HCT116 (cell line): ENCODE measurements at regions of chr19 and their contacts with region 1.

Region 1: DNA sequence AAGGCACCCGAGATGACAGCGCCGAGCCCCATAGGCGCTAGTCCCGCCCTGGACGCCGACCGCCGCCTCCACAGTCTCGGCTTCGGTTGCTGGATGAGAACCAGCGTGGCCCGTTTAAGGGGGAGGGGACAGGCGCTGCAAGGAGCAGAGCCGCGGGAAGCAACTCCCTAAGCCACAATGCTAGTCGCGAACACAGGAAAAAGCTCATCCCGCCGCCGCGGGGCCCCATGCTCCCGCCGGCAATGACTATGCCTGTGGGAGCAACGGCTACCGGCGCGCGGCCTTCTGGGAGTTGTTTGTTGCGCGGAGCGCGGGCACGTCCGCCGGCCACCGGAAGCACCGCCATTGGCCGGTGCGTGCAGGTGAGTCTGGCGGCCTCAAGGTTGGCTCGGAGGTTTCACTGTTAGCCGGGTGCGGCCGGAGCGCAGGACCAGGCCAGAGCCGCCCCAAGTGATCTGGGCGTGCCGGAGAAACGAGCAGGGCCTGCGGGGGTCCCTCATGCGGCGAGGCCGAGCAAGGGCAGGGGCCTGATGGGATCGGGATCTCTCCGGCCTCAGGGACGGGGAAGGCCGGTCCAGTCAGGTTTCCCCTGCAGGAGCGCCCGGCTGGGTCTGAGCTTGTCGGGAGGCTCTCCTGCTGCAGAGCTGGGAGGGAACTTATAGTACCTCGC is at the start of gene ZNF544:
- DNase-seq: peak; percentile 48
- ATAC-seq: peak; percentile 92
- H3K4me3 ChIP-seq: peak within 1 kb of the TSS; percentile 73 to 91
- H3K27ac ChIP-seq: peak within 1 kb of the TSS; percentile 98
- H3K4me1 ChIP-seq: peaks cover 3 to 17% of the 10 kb centered on the region in 2 experiments
- H3K27me3 ChIP-seq: no peaks in the 10 kb centered on the region
- CTCF ChIP-seq: no peak
- POLR2A ChIP-seq: peak; percentile 89
- RAD21 ChIP-seq: no peak
- total RNA-seq, gene ZNF544: 46.3 TPM

Region 2: DNA sequence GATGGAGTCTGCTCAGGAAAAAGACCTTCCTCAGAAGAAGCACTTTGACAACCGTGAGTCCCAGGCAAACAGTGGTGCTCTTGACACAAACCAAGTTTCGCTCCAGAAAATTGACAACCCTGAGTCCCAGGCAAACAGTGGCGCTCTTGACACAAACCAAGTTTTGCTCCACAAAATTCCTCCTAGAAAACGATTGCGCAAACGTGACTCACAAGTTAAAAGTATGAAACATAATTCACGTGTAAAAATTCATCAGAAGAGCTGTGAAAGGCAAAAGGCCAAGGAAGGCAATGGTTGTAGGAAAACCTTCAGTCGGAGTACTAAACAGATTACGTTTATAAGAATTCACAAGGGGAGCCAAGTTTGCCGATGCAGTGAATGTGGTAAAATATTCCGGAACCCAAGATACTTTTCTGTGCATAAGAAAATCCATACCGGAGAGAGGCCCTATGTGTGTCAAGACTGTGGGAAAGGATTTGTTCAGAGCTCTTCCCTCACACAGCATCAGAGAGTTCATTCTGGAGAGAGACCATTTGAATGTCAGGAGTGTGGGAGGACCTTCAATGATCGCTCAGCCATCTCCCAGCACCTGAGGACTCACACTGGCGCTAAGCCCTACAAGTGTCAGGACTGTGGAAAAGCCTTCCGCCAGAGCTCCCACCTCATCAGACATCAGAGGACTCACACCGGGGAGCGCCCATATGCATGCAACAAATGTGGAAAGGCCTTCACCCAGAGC is 16.2 kb before region 1 on chr19:
- CTCF ChIA-PET with region 1: no interaction called
- POLR2A ChIA-PET with region 1: no interaction called
- RAD21 ChIA-PET with region 1: no interaction called
- intact Hi-C with region 1: no loop called
- DNase-seq: no peak
- ATAC-seq: no peak
- H3K4me3 ChIP-seq: no peak overlapping the region
- H3K27ac ChIP-seq: no peak overlapping the region
- H3K4me1 ChIP-seq: no peaks in the 10 kb centered on the region
- H3K27me3 ChIP-seq: no peaks in the 10 kb centered on the region
- CTCF ChIP-seq: no peak
- POLR2A ChIP-seq: no peak
- RAD21 ChIP-seq: no peak

Region 3: GRCh38 chr19:58305065-58305931 is 76.6 kb after region 1 on chr19 and contains the start of gene ERVK3-1:
- CTCF ChIA-PET with region 1: interaction called, 3 read pairs
- POLR2A ChIA-PET with region 1: no interaction called
- RAD21 ChIA-PET with region 1: no interaction called
- intact Hi-C with region 1: loop called (anchors 5 kb)
- DNase-seq: peak; percentile 91
- ATAC-seq: peak; percentile 99
- H3K4me3 ChIP-seq: peak within 1 kb of the TSS; percentile 92 to 93
- H3K27ac ChIP-seq: peak within 1 kb of the TSS; percentile 74
- H3K4me1 ChIP-seq: peaks cover 5 to 15% of the 10 kb centered on the region in 2 experiments; a peak in 3 of 4 replicates
- H3K27me3 ChIP-seq: no peaks in the 10 kb centered on the region
- CTCF ChIP-seq: no peak
- POLR2A ChIP-seq: peak; percentile 78
- RAD21 ChIP-seq: no peak
- total RNA-seq, gene ERVK3-1: 28.1 TPM

Region 4: GRCh38 chr19:58439576-58440554 is 211.1 kb after region 1 on chr19 and contains the start of gene ZNF132:
- CTCF ChIA-PET with region 1: no interaction called
- POLR2A ChIA-PET with region 1: no interaction called
- RAD21 ChIA-PET with region 1: no interaction called
- intact Hi-C with region 1: no loop called
- DNase-seq: no peak
- ATAC-seq: no peak
- H3K4me3 ChIP-seq: no peak within 1 kb of the TSS
- H3K27ac ChIP-seq: no peak within 1 kb of the TSS
- H3K4me1 ChIP-seq: no peaks in the 10 kb centered on the region
- H3K27me3 ChIP-seq: no peaks in the 10 kb centered on the region
- CTCF ChIP-seq: no peak
- POLR2A ChIP-seq: no peak
- RAD21 ChIP-seq: no peak
- total RNA-seq, gene ZNF132: not detected

Region 5: DNA sequence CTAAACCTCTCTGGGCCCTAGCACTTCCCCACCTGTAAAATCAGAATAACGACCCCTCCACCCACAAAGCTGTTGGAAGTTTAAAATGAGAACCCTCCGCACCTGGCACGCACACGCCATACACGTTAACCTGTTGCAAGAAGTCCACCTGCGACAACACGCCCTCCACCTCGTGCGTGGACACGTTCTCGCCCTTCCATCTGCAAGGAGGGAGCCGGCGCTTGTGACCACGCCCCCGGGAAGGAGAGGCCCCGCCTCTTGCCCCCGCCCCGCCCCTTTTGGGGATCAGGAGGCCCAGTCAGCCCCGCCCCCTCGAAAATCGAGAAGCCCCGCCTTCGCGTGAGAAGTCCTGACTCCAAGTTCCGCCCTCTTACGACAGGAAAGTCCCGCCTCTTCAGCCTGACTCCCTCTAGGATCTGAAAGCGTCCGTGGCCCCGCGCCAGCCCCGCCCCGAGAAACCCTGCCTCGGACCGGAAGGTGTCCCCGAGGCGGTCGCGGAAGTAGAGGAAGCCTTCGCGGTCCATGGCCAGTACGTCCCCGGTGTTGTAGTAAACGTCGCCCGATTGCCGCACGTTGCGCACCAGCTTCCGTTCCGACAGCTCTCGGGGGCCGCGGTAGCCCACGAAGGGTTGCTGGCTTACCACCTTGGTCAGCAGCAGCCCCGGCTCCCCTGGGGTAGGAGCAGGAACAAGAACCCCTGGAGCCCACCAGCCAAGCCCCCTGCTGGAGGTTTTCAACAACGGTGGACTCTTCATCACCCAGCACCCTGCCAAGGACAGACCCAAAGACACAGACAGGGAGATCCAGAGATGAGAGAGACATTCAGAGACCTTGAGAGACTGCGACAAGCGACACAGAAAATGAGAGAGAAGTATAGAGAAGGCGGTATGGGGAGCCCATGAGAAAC is 270.6 kb after region 1 on chr19:
- CTCF ChIA-PET with region 1: no interaction called
- POLR2A ChIA-PET with region 1: no interaction called
- RAD21 ChIA-PET with region 1: no interaction called
- intact Hi-C with region 1: no loop called
- DNase-seq: peak; percentile 98
- ATAC-seq: peak; percentile 96
- H3K4me3 ChIP-seq: peak overlapping the region; percentile 62 to 83
- H3K27ac ChIP-seq: peak overlapping the region; percentile 82
- H3K4me1 ChIP-seq: peaks cover 10 to 22% of the 10 kb centered on the region in 2 experiments; a peak in 3 of 4 replicates
- H3K27me3 ChIP-seq: no peaks in the 10 kb centered on the region
- CTCF ChIP-seq: peak in 1 of 3 experiments; percentile 25; a peak in 1 of 6 replicates
- POLR2A ChIP-seq: peak; percentile 55
- RAD21 ChIP-seq: no peak